Aorta (tissue), 5 donors: ENCODE measurements at regions of chr9 and their contacts with region 1.

Region 1: DNA sequence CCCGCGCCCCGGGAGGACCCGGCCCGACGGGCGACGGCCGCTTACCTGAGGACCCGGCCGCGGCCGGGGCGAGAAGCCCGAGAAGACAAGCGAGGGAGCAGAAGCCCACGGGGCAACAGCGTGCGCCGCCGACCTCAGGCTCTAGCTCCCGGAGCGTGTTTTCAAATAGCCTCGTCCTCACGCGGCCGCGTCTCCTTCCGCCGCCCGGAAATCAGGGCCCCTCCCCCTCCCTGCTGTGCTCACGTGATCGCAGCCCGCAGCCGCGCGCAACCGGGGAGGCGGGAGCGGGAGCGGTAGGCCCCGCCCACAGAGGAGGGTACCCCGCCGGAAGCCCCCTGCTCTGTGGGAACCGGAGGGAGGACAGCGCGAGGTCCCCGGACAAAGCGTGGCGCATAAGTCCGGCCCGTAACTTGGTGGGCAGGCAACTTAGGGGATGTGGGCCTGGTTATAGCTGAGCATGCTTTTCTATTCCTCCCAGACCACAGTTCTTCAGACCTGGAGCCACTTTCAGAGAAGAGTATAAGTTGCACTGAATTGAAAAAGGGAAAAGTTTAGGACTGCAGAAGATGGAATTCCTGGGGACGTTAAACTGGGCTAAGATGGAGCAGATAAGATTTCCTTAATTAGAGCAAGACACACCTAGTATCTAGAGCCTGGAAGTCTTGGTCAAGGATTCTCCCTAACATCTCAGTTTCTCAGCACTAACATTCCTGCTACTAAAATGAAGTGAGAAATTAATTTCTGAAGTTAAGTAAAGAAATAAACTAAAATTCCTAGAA is at the start of gene TEX10:
- DNase-seq: peak; percentile 93 to 96
- ATAC-seq: peak; percentile 98
- H3K4me3 ChIP-seq: peak within 1 kb of the TSS; percentile 82 to 83
- H3K27ac ChIP-seq: peak within 1 kb of the TSS in 1 of 2 donors; percentile 6
- H3K4me1 ChIP-seq: peaks cover 2 to 5% of the 10 kb centered on the region in 2 donors
- H3K27me3 ChIP-seq: no peaks in the 10 kb centered on the region
- total RNA-seq, gene TEX10: 10.6 to 12.9 TPM

Region 2: DNA sequence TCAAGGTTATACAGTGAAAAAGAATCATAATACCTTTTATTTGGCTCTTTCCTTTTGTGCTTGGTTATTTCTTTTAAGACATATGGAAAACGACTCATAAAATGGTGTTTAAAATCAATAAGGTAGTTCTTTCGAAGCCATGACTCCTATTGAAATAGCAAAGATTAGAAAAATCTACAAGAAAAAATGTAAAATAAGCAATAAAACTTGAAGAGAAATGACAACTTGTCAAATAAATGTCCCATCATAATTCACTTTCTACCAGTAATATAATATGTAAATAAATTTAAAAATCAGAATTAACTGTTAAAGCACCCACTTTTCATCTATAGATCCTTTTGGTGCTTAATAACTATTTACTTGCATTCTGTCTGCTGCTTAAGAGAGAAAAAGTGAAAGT is 12.7 kb before region 1 on chr9:
- intact Hi-C with region 1: no loop called
- DNase-seq: no peak
- ATAC-seq: no peak
- H3K4me3 ChIP-seq: no peak overlapping the region
- H3K27ac ChIP-seq: no peak overlapping the region
- H3K4me1 ChIP-seq: no peaks in the 10 kb centered on the region
- H3K27me3 ChIP-seq: no peaks in the 10 kb centered on the region

Region 3: DNA sequence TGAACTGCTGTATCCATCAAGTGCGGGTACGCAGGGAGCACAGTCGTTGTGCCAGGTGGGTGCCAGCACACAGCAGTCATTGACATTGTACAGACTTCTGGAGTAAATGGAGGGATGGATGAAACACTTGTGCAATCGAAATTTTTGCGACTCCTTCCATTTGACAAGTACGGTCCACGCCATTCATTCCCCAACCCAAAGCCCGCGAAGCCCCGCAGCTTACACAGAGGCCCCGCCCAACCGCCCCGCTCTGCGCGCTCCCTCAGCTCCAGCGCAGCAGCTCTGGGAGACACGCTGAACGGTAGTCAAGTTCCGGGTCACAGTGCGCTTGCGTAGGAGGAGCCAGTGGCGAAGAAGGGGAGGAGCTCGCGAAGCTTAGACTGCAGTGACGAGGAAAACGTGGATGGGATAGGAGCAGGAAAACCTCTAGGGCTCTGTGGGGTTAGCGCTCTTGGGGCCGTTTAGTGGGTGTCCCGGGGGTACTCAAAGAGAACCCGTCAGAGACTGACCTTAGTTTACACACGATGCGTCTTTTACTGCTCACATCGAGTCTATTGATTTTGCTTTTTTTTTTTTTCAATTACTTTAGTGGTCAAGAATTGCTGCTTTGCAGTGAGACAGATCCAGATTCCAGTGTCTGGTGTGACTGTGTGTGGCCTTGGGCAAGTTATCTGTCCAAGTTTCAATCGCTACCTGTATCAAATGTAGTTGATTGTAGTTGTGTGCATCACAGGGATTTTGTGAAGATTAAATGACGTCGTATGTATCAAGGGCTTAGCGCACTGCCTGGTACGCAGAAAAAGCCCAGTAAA is 58.8 kb after region 1 on chr9:
- intact Hi-C with region 1: loop called (anchors 5 kb)
- DNase-seq: peak; percentile 94 to 96
- ATAC-seq: peak; percentile 96
- H3K4me3 ChIP-seq: peak overlapping the region in 1 of 2 donors; percentile 10
- H3K27ac ChIP-seq: no peak overlapping the region
- H3K4me1 ChIP-seq: no peaks in the 10 kb centered on the region
- H3K27me3 ChIP-seq: no peaks in the 10 kb centered on the region

Region 4: DNA sequence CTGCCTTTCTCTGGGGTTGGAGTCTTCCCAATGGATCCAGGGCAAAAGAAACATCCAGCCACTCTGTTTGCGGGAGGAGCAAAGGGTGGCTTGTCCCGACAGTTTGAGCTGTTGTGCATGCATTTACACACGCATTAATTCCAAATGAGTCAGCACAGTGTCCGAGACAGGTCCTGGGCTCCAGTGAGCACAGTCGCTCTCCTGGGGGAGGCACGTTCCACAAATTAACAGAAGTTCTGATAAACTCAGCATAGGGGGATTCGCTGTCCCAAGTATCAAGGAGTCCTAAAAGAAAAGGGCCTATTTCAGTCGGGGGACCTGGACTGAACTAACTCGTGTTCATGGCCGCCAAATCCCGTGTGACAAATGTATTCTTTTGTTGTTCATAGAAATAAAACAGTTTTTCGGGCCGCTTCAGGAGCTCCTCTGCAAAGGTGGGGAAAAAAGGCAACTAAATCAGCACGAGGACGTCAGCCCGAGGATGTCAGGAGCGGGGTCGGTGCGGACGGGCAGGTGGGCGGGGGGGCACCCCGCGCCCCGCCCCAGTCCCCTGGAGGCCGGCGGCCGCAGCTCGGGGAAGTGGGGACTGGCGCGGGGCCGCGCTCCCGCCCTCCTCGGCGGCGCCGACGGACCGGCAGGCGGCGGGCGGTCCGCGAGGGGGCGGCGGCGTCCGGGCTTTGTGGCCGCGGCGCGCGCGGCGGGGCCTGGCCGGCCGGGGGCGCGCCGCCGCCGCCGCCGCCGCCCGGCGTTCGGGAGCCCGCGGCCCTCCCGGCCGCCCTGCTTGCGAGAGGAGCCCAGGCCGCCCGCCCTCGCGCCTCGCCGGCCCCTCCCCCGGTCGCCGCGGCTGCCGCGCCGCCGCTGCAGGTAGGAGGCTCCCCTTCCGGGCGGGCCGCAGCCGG is 73.9 kb after region 1 on chr9 and contains the start of gene MSANTD3:
- intact Hi-C with region 1: loop called in 1 of 2 experiments (anchors 5 kb)
- DNase-seq: peak; percentile 66 to 86
- ATAC-seq: peak; percentile 86
- H3K4me3 ChIP-seq: peak within 1 kb of the TSS; percentile 76 to 98
- H3K27ac ChIP-seq: peak within 1 kb of the TSS; percentile 95 to 97
- H3K4me1 ChIP-seq: peaks cover 0 to 3% of the 10 kb centered on the region in 2 donors
- H3K27me3 ChIP-seq: no peaks in the 10 kb centered on the region
- total RNA-seq, gene MSANTD3: 26.6 to 31.0 TPM

Region 5: GRCh38 chr9:100437860-100438805 is 85.2 kb after region 1 on chr9:
- intact Hi-C with region 1: loop called in 1 of 2 experiments (anchors 5 kb)
- DNase-seq: peak; percentile 75 to 79
- ATAC-seq: peak; percentile 68
- H3K4me3 ChIP-seq: no peak overlapping the region
- H3K27ac ChIP-seq: no peak overlapping the region
- H3K4me1 ChIP-seq: peaks cover 0 to 1% of the 10 kb centered on the region in 2 donors
- H3K27me3 ChIP-seq: no peaks in the 10 kb centered on the region

Region 6: GRCh38 chr9:101398068-101398929 is 1045.4 kb after region 1 on chr9 and contains the starts of genes MRPL50 and ZNF189:
- intact Hi-C with region 1: loop called in 1 of 2 experiments (anchors 10 kb)
- DNase-seq: peak; percentile 99
- ATAC-seq: peak; percentile 100
- H3K4me3 ChIP-seq: peak within 1 kb of the TSS; percentile 90 to 99
- H3K27ac ChIP-seq: peak within 1 kb of the TSS in 1 of 2 donors; percentile 73
- H3K4me1 ChIP-seq: peaks cover 0 to 5% of the 10 kb centered on the region in 2 donors
- H3K27me3 ChIP-seq: no peaks in the 10 kb centered on the region
- total RNA-seq, gene MRPL50: 7.6 to 8.9 TPM
- total RNA-seq, gene ZNF189: 20.4 to 23.3 TPM